HCT116 (cell line): ENCODE measurements at regions of chr9 and their contacts with region 1.

Region 1: GRCh38 chr9:35481347-35481975 is 8.4 kb upstream of the RUSC2 start:
- DNase-seq: peak; percentile 54
- ATAC-seq: peak; percentile 64
- H3K4me3 ChIP-seq: no peak overlapping the region
- H3K27ac ChIP-seq: no peak overlapping the region
- H3K4me1 ChIP-seq: no peaks in the 10 kb centered on the region
- H3K27me3 ChIP-seq: no peaks in the 10 kb centered on the region
- CTCF ChIP-seq: peak; percentile 78 to 93 (median 87)
- POLR2A ChIP-seq: no peak
- RAD21 ChIP-seq: peak; percentile 94

Region 2: DNA sequence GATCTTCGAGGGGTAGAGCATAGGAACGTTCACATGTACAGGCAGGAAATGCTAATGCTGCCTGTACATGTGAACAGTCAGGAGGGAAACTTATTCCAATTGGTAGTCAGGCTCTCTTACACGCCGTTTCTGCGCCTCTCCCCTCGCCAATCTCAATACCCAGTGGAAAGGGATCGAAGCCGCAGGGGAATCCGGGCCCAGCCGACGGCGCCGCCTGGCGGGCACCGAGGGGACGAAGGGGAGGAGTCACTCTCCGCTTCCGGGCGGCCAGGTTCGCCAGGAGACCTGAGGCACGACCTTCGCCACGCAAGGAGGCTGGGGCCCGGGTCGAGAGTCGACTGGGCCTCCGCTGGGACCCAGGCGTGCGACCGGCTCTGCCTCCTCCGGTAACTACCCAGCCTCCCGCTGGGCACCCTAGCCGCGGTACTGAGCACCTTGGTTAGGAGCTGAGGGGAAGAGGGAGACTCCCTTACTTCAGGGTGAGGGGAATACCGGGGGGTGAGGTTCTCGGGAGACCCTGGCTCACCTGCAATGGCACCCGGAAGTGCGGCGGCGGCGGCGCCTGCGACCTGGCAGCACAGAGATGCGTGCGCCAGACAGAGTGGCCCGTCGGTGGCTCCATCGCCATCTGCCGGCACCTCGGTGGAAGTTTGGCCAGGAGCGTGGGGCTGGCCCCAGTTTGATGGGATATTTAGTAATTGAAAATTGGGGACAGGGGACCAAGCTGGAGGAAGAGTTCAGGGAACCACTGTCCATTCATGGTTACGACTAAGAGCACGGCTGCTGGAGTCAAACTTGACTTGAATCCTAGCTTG is 385.2 kb before region 1 on chr9 and contains the start of gene PIGO:
- CTCF ChIA-PET with region 1: no interaction called
- POLR2A ChIA-PET with region 1: no interaction called
- RAD21 ChIA-PET with region 1: no interaction called
- intact Hi-C with region 1: loop called (anchors 2 kb)
- DNase-seq: peak; percentile 81
- ATAC-seq: peak; percentile 90
- H3K4me3 ChIP-seq: peak within 1 kb of the TSS; percentile 57 to 92
- H3K27ac ChIP-seq: peak within 1 kb of the TSS; percentile 92
- H3K4me1 ChIP-seq: peaks cover 5 to 19% of the 10 kb centered on the region in 2 experiments; a peak in 3 of 4 replicates
- H3K27me3 ChIP-seq: no peaks in the 10 kb centered on the region
- CTCF ChIP-seq: peak in 2 of 3 experiments; percentile 59 to 78; a peak in 4 of 6 replicates
- POLR2A ChIP-seq: no peak
- RAD21 ChIP-seq: no peak
- total RNA-seq, gene PIGO: 24.0 TPM

Region 3: GRCh38 chr9:35193762-35194161 is 287.7 kb before region 1 on chr9:
- CTCF ChIA-PET with region 1: no interaction called
- POLR2A ChIA-PET with region 1: no interaction called
- RAD21 ChIA-PET with region 1: no interaction called
- intact Hi-C with region 1: loop called (anchors 5 kb)
- DNase-seq: no peak
- ATAC-seq: no peak
- H3K4me3 ChIP-seq: no peak overlapping the region
- H3K27ac ChIP-seq: no peak overlapping the region
- H3K4me1 ChIP-seq: no peaks in the 10 kb centered on the region
- H3K27me3 ChIP-seq: no peaks in the 10 kb centered on the region
- CTCF ChIP-seq: 0 out of 6 replicates have a peak, but pooled peaks of 1 of the 3 experiments have one; percentile 13
- POLR2A ChIP-seq: no peak
- RAD21 ChIP-seq: peak; percentile 50

Region 4: GRCh38 chr9:35553670-35554543 is 72.4 kb after region 1 on chr9:
- CTCF ChIA-PET with region 1: interaction called, 29 read pairs
- POLR2A ChIA-PET with region 1: no interaction called
- RAD21 ChIA-PET with region 1: interaction called, 3 to 4 read pairs
- intact Hi-C with region 1: loop called (anchors 1 kb)
- DNase-seq: peak; percentile 37
- ATAC-seq: peak; percentile 97
- H3K4me3 ChIP-seq: no peak overlapping the region
- H3K27ac ChIP-seq: no peak overlapping the region
- H3K4me1 ChIP-seq: no peaks in the 10 kb centered on the region; a peak in 1 of 4 replicates
- H3K27me3 ChIP-seq: no peaks in the 10 kb centered on the region
- CTCF ChIP-seq: peak; percentile 74 to 96 (median 95)
- POLR2A ChIP-seq: no peak
- RAD21 ChIP-seq: peak; percentile 99